HCT116 (cell line): ENCODE measurements at regions of chr17 and their contacts with region 1.

Region 1: DNA sequence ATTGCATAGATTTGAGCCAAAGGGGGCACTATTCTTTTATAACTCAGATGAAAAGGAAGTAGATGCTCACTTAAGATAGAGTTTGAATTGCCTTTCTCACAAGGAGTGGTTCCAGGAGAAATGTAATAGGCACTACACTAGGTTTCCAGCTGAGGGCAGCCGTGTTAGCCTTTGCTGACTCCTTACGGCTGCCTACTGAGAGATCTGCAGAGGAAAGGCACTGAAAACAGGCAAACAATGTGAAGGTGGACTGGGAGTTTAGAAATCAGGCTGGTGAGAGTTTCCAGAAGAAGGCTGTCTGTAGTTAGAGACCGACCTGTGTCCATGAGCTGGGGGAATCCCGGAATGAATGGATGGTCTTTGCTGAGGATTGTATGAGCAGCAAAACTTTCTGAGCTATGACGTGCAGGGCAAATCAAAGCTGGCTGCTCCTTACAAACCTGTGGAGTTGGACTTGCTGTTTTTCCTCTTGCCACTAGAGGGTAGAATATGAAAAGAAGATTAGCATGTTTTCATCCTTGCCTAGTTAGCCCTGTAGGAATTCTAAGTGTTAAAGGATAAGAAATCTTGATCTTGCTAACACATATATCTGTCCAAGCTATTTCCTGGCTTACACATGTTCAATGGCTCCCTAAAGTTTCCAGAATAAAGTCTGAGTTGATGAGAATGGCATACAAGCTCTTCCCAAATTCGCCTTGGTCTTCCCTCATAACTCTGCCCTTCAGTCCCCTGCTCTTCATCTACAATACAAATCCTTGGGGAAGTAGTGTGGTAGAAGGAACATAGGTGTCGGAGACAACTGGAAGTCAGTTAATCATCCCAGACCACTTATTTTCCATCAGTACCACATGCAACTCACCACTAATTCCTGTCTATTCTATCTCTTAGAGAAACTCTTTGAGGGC is 20.1 kb upstream of the TAOK1 start:
- DNase-seq: peak; percentile 66
- ATAC-seq: peak; percentile 94
- H3K4me3 ChIP-seq: peak overlapping the region; percentile 0 to 27; a peak in 3 of 4 replicates
- H3K27ac ChIP-seq: peak overlapping the region; percentile 11
- H3K4me1 ChIP-seq: peaks cover 2 to 18% of the 10 kb centered on the region in 2 experiments; a peak in 3 of 4 replicates
- H3K27me3 ChIP-seq: no peaks in the 10 kb centered on the region
- CTCF ChIP-seq: peak; percentile 62 to 88 (median 68)
- POLR2A ChIP-seq: no peak
- RAD21 ChIP-seq: peak; percentile 74

Region 2: GRCh38 chr17:29283271-29283895 is 86.7 kb before region 1 on chr17:
- CTCF ChIA-PET with region 1: no interaction called
- POLR2A ChIA-PET with region 1: no interaction called
- RAD21 ChIA-PET with region 1: no interaction called
- intact Hi-C with region 1: no loop called
- DNase-seq: no peak
- ATAC-seq: peak; percentile 57
- H3K4me3 ChIP-seq: no peak overlapping the region
- H3K27ac ChIP-seq: no peak overlapping the region
- H3K4me1 ChIP-seq: no peaks in the 10 kb centered on the region
- H3K27me3 ChIP-seq: no peaks in the 10 kb centered on the region
- CTCF ChIP-seq: no peak; a peak in 1 of 6 replicates
- POLR2A ChIP-seq: no peak
- RAD21 ChIP-seq: no peak

Region 3: GRCh38 chr17:29357821-29358232 is 12.3 kb before region 1 on chr17:
- CTCF ChIA-PET with region 1: interaction called, 21 read pairs
- POLR2A ChIA-PET with region 1: no interaction called
- RAD21 ChIA-PET with region 1: no interaction called
- intact Hi-C with region 1: no loop called
- DNase-seq: no peak
- ATAC-seq: no peak
- H3K4me3 ChIP-seq: no peak overlapping the region
- H3K27ac ChIP-seq: no peak overlapping the region
- H3K4me1 ChIP-seq: peaks cover 2 to 4% of the 10 kb centered on the region in 2 experiments; a peak in 2 of 4 replicates
- H3K27me3 ChIP-seq: no peaks in the 10 kb centered on the region
- CTCF ChIP-seq: no peak
- POLR2A ChIP-seq: no peak
- RAD21 ChIP-seq: no peak

Region 4: GRCh38 chr17:29533976-29534375 is 163.9 kb after region 1 on chr17:
- CTCF ChIA-PET with region 1: interaction called, 43 read pairs
- POLR2A ChIA-PET with region 1: no interaction called
- RAD21 ChIA-PET with region 1: no interaction called
- intact Hi-C with region 1: loop called (anchors 1 kb)
- DNase-seq: no peak
- ATAC-seq: no peak
- H3K4me3 ChIP-seq: no peak overlapping the region
- H3K27ac ChIP-seq: no peak overlapping the region
- H3K4me1 ChIP-seq: no peaks in the 10 kb centered on the region
- H3K27me3 ChIP-seq: no peaks in the 10 kb centered on the region
- CTCF ChIP-seq: no peak
- POLR2A ChIP-seq: no peak
- RAD21 ChIP-seq: no peak

Region 5: GRCh38 chr17:29568331-29569244 is 198.5 kb after region 1 on chr17 and contains the start of gene TP53I13:
- CTCF ChIA-PET with region 1: interaction called, 30 read pairs
- POLR2A ChIA-PET with region 1: no interaction called
- RAD21 ChIA-PET with region 1: interaction called, 3 to 5 read pairs
- intact Hi-C with region 1: no loop called
- DNase-seq: peak; percentile 22
- ATAC-seq: peak; percentile 52
- H3K4me3 ChIP-seq: peak within 1 kb of the TSS; percentile 79 to 82
- H3K27ac ChIP-seq: peak within 1 kb of the TSS; percentile 82
- H3K4me1 ChIP-seq: peaks cover 13 to 25% of the 10 kb centered on the region in 2 experiments
- H3K27me3 ChIP-seq: no peaks in the 10 kb centered on the region
- CTCF ChIP-seq: no peak
- POLR2A ChIP-seq: peak; percentile 47
- RAD21 ChIP-seq: no peak
- total RNA-seq, gene TP53I13: 33.3 TPM

Region 6: GRCh38 chr17:29589524-29590410 is 219.7 kb after region 1 on chr17 and contains the start of gene GIT1:
- CTCF ChIA-PET with region 1: interaction called, 44 read pairs
- POLR2A ChIA-PET with region 1: interaction called, 3 read pairs
- RAD21 ChIA-PET with region 1: interaction called, 3 read pairs
- intact Hi-C with region 1: loop called (anchors 1 kb)
- DNase-seq: peak; percentile 59
- ATAC-seq: peak; percentile 55
- H3K4me3 ChIP-seq: peak within 1 kb of the TSS; percentile 86 to 96
- H3K27ac ChIP-seq: peak within 1 kb of the TSS; percentile 94
- H3K4me1 ChIP-seq: peaks cover 32 to 73% of the 10 kb centered on the region in 2 experiments
- H3K27me3 ChIP-seq: no peaks in the 10 kb centered on the region
- CTCF ChIP-seq: no peak
- POLR2A ChIP-seq: peak; percentile 23
- RAD21 ChIP-seq: no peak
- total RNA-seq, gene GIT1: 76.5 TPM